B cell (primary cell): ENCODE measurements at regions of chr2 and their contacts with region 1.

Region 1: GRCh38 chr2:25362049-25362433 is 20.3 kb upstream of the DNMT3A start:
- DNase-seq: peak; percentile 95
- ATAC-seq: peak; percentile 83
- H3K4me3 ChIP-seq: peak overlapping the region; percentile 58 to 91 (median 72)
- H3K4me3 Mint-ChIP-seq: peak overlapping the region; percentile 89
- H3K27ac ChIP-seq: peak overlapping the region; percentile 97 to 98
- H3K27ac Mint-ChIP-seq: peak overlapping the region; percentile 96
- H3K4me1 ChIP-seq: peaks cover 7 to 18% of the 10 kb centered on the region in 2 donors
- H3K4me1 Mint-ChIP-seq: peaks cover 28% of the 10 kb centered on the region
- H3K27me3 ChIP-seq: no peaks in the 10 kb centered on the region
- H3K27me3 Mint-ChIP-seq: no peaks in the 10 kb centered on the region
- CTCF ChIP-seq: peak; percentile 93

Region 2: DNA sequence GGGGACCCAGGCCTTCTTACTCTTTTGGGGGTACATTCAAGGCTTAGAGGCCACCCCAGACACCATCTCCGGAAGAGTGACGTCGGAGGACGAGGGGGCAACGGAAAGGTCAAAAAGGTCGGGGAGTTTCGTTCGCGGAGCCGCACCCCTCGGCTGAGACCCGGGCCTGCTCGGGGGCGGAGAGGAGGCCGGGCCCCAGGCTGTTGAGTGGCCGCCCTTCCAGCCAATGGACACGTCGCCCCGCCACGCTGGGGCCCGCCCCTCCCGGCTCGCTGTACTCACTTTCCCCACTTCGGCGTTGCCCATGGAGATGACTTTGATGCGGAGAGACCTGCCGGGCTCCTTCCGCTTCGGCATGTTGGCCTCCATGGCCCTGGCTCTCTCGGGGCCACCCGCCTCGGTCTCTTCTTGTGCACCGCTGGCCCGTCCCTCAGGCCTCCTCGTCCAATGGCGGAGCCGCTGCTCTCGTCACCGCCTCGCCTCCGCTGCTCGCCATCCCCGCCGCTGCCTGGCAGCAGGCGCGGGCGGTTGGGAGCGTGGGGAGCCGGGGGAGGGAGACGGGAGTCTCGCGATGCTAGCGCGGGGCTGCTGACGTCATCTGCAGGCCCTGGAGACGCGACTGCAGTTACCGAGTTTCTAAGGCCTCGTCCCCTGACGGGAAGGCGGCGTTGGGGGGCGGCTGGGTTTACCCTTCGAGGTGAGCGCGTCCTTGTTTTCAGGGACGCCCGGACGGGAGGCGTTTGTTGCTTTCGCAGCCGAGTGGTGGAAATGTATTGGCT is 390.3 kb before region 1 on chr2 and contains the start of gene DNAJC27:
- CTCF ChIA-PET with region 1: no interaction called
- POLR2A ChIA-PET with region 1: no interaction called
- intact Hi-C with region 1: loop called (anchors 5 kb)
- DNase-seq: peak; percentile 99
- ATAC-seq: peak; percentile 90
- H3K4me3 ChIP-seq: peak within 1 kb of the TSS; percentile 73 to 85 (median 82)
- H3K4me3 Mint-ChIP-seq: peak within 1 kb of the TSS; percentile 97
- H3K27ac ChIP-seq: peak within 1 kb of the TSS; percentile 97 to 100
- H3K27ac Mint-ChIP-seq: peak within 1 kb of the TSS; percentile 100
- H3K4me1 ChIP-seq: peaks cover 8 to 15% of the 10 kb centered on the region in 2 donors
- H3K4me1 Mint-ChIP-seq: peaks cover 14% of the 10 kb centered on the region
- H3K27me3 ChIP-seq: no peaks in the 10 kb centered on the region
- H3K27me3 Mint-ChIP-seq: no peaks in the 10 kb centered on the region
- CTCF ChIP-seq: no peak
- total RNA-seq, gene DNAJC27: 15.6 and 16.6 TPM in 2 replicates

Region 3: DNA sequence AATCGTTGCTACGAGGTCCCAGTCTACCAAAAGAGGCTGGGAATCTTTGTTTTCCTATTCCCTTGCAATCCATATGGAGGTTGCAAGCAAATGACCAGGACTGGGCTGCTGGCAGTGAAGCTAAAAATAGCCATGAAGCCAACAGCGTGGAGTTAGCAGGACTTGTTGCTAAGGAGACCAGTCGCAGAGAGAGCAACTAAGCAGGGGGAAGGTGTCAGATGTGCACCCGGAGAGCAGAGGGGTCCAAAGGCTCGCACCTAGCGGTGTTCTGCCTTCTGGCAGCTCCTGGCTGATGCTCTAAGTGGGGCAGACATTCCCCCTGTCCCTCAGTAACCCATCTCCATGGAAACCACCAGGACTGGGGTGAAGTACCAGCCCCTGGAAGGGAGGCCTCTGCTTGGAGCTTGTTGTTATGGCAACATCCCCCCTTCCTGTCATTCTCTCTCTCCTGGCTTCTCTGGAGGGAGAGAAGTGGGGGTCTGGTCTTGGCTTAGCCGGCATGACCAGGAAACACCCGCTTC is 104.9 kb before region 1 on chr2:
- CTCF ChIA-PET with region 1: no interaction called
- POLR2A ChIA-PET with region 1: no interaction called
- intact Hi-C with region 1: no loop called
- DNase-seq: no peak
- ATAC-seq: no peak
- H3K4me3 ChIP-seq: no peak overlapping the region
- H3K4me3 Mint-ChIP-seq: no peak overlapping the region
- H3K27ac ChIP-seq: no peak overlapping the region
- H3K27ac Mint-ChIP-seq: no peak overlapping the region
- H3K4me1 ChIP-seq: peaks cover 3 to 7% of the 10 kb centered on the region in 2 donors
- H3K4me1 Mint-ChIP-seq: peaks cover 6% of the 10 kb centered on the region
- H3K27me3 ChIP-seq: no peaks in the 10 kb centered on the region
- H3K27me3 Mint-ChIP-seq: no peaks in the 10 kb centered on the region
- CTCF ChIP-seq: no peak

Region 4: DNA sequence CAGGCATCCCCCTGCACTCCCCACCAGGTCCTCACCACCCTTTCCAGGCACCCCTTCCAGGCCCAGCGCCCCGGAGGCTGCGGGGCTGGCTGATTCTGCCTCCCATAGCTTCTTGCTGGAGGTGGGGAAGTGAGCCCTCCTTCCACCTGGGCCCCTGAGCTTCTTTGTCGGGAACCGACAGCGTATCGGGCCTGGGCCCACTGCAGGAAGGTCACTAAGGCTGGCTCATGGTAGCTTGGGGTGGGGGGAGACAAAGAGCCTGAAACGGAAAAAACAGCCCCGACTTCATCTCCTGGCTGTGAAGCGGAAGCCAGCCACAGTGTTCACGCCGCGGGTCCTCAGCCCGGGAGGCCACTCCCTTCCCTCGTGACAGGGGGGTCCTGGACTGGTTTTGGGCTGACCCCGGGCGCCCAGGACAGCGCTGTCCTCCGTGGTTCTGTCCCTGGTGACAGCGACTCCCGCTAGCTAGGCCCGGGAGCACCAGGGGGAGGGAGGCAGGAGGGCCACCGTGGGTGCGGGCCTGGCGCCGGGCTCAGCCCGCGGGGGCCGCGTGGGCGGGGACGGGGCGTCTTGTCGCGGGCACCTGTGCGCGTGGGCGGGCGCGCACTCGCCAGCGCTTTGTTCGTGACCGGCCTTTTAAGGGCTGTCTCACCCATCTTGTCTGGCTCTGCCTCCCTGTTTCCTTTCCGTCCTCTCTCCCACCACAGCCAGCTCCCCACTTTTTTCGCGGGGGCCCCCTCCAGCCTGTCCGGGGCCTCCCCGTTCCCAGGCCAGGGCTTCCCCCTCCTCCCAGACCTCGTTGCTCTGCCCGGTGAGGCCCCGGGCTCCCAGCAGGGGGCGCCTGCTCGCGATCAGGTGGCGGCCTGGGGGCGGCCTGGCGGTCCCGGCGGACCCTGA is 85.2 kb before region 1 on chr2:
- CTCF ChIA-PET with region 1: interaction called, 7 read pairs
- POLR2A ChIA-PET with region 1: interaction called, 10 read pairs
- intact Hi-C with region 1: loop called (anchors 1 kb)
- DNase-seq: peak; percentile 89
- ATAC-seq: peak; percentile 35
- H3K4me3 ChIP-seq: peak overlapping the region in 4 of 5 experiments; percentile 46 to 60 (median 56)
- H3K4me3 Mint-ChIP-seq: peak overlapping the region; percentile 79
- H3K27ac ChIP-seq: peak overlapping the region; percentile 94 to 96
- H3K27ac Mint-ChIP-seq: peak overlapping the region; percentile 94
- H3K4me1 ChIP-seq: peaks cover 79 to 92% of the 10 kb centered on the region in 2 donors
- H3K4me1 Mint-ChIP-seq: peaks cover 78% of the 10 kb centered on the region
- H3K27me3 ChIP-seq: no peaks in the 10 kb centered on the region
- H3K27me3 Mint-ChIP-seq: no peaks in the 10 kb centered on the region
- CTCF ChIP-seq: peak; percentile 83

Region 5: GRCh38 chr2:25376750-25377621 is 14.9 kb after region 1 on chr2:
- CTCF ChIA-PET with region 1: interaction called, 109 read pairs
- POLR2A ChIA-PET with region 1: interaction called, 28 read pairs
- intact Hi-C with region 1: loop called (anchors 1 kb)
- DNase-seq: peak; percentile 94
- ATAC-seq: peak; percentile 99
- H3K4me3 ChIP-seq: peak overlapping the region in 3 of 5 experiments; percentile 6 to 37 (median 29)
- H3K4me3 Mint-ChIP-seq: peak overlapping the region; percentile 78
- H3K27ac ChIP-seq: peak overlapping the region; percentile 80 to 87
- H3K27ac Mint-ChIP-seq: peak overlapping the region; percentile 92
- H3K4me1 ChIP-seq: peaks cover 31 to 41% of the 10 kb centered on the region in 2 donors
- H3K4me1 Mint-ChIP-seq: peaks cover 34% of the 10 kb centered on the region
- H3K27me3 ChIP-seq: no peaks in the 10 kb centered on the region
- H3K27me3 Mint-ChIP-seq: no peaks in the 10 kb centered on the region
- CTCF ChIP-seq: peak; percentile 97

Region 6: GRCh38 chr2:25420820-25421237 is 58.8 kb after region 1 on chr2:
- CTCF ChIA-PET with region 1: interaction called, 33 read pairs
- POLR2A ChIA-PET with region 1: interaction called, 6 read pairs
- intact Hi-C with region 1: loop called (anchors 1 kb)
- DNase-seq: peak; percentile 60
- ATAC-seq: peak; percentile 42
- H3K4me3 ChIP-seq: peak overlapping the region in 4 of 5 experiments; percentile 19 to 57 (median 34)
- H3K4me3 Mint-ChIP-seq: peak overlapping the region; percentile 84
- H3K27ac ChIP-seq: peak overlapping the region; percentile 89 to 94
- H3K27ac Mint-ChIP-seq: peak overlapping the region; percentile 96
- H3K4me1 ChIP-seq: peaks cover 79 to 86% of the 10 kb centered on the region in 2 donors
- H3K4me1 Mint-ChIP-seq: peaks cover 85% of the 10 kb centered on the region
- H3K27me3 ChIP-seq: no peaks in the 10 kb centered on the region
- H3K27me3 Mint-ChIP-seq: no peaks in the 10 kb centered on the region
- CTCF ChIP-seq: no peak

Region 7: DNA sequence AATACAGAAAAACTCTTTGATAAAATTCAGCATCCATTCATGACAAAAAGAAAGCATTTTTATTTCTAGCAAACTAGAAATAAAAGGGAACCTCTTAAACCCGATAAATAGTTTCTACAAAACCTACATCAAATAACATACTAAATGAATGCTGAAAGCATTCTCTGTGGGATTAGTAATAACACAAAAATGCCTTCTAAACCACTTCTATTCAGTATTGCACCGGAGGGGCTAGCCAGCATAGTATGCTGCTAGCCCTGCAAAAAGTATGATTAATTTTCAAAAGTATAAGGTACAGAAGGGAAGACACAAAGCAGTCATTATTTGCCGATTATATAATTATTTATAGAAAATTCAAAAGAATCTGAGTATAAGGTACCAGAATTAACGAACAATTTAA is 166.1 kb after region 1 on chr2:
- CTCF ChIA-PET with region 1: interaction called, 6 read pairs
- POLR2A ChIA-PET with region 1: interaction called, 11 read pairs
- intact Hi-C with region 1: no loop called
- DNase-seq: no peak
- ATAC-seq: no peak
- H3K4me3 ChIP-seq: no peak overlapping the region
- H3K4me3 Mint-ChIP-seq: no peak overlapping the region
- H3K27ac ChIP-seq: no peak overlapping the region
- H3K27ac Mint-ChIP-seq: no peak overlapping the region
- H3K4me1 ChIP-seq: no peaks in the 10 kb centered on the region
- H3K4me1 Mint-ChIP-seq: no peaks in the 10 kb centered on the region
- H3K27me3 ChIP-seq: no peaks in the 10 kb centered on the region
- H3K27me3 Mint-ChIP-seq: no peaks in the 10 kb centered on the region
- CTCF ChIP-seq: no peak